Ascending aorta (tissue), 2 donors: ENCODE measurements at regions of chr6 and their contacts with region 1.

Region 1: GRCh38 chr6:98824162-98824906 is 10.0 kb upstream of the POU3F2 start:
- DNase-seq: no peak
- H3K4me3 ChIP-seq: peak overlapping the region in 1 of 2 donors; percentile 42
- H3K27ac ChIP-seq: no peak overlapping the region
- H3K4me1 ChIP-seq: peaks cover 0 to 14% of the 10 kb centered on the region in 2 donors
- H3K27me3 ChIP-seq: peaks cover 19% of the 10 kb centered on the region
- CTCF ChIP-seq: no peak

Region 2: GRCh38 chr6:99613409-99613704 is 789.0 kb after region 1 on chr6:
- intact Hi-C with region 1: loop called (anchors 10 kb)
- DNase-seq: no peak
- H3K4me3 ChIP-seq: peak overlapping the region; percentile 55 to 65
- H3K27ac ChIP-seq: no peak overlapping the region
- H3K4me1 ChIP-seq: peaks cover 6 to 15% of the 10 kb centered on the region in 2 donors
- H3K27me3 ChIP-seq: peaks cover 31% of the 10 kb centered on the region
- CTCF ChIP-seq: peak in 1 of 3 experiments; percentile 37